ENCODE measurements at regions of chr7 and their contacts with region 1.

Region 1: DNA sequence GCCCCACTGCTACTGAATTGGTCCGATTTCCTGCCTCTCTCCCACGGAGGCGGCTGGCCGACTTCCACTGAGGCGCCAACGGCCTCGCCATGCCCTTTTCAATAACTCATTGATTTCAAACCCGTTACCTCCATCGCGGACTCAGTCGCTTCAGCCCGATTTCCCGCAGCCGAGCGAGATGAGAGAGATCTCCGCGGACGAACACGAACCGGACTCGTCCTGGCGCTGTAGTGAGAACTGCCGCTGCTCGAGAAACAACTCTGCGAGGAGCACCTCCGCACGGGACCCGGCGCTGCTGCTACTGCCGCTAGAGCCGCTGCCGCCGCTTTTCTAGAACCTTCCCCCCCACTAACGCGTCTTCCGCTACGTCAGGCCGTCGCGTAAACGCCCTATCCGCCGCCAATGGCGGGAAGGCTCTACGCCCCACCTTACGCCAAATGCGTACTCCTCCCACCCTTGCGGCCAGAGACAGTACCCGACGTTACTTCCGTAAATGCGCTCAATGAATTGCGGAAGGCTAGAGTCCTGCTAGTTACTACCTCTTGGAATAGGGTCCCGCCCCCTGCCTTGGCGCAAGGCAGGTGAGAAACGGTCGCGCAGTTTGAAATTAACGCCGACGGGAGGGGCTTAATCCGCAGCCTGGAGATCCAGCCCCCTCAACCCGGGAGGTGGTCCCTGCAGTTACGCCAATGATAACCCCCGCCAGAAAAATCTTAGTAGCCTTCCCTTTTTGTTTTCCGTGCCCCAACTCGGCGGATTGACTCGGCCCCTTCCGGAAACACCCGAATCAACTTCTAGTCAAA is at the start of gene HNRNPA2B1:
- DNase-seq: peak; percentile 88
- H3K4me3 ChIP-seq: peak within 1 kb of the TSS; percentile 100
- H3K27ac ChIP-seq: peak within 1 kb of the TSS; percentile 99 to 100
- H3K4me1 ChIP-seq: peaks cover 24 to 37% of the 10 kb centered on the region in 2 experiments
- H3K27me3 ChIP-seq: no peaks in the 10 kb centered on the region
- CTCF ChIP-seq: no peak
- EP300 ChIP-seq: no peak
- RAD21 ChIP-seq: no peak
- polyA plus RNA-seq, gene HNRNPA2B1: 459 and 483 TPM in 2 replicates

Region 2: GRCh38 chr7:25862260-25863037 is 338.2 kb before region 1 on chr7:
- CTCF ChIA-PET with region 1: no interaction called
- POLR2A ChIA-PET with region 1: interaction called, 10 read pairs
- DNase-seq: peak; percentile 95
- H3K4me3 ChIP-seq: peak overlapping the region; percentile 37 to 48
- H3K27ac ChIP-seq: no peak overlapping the region
- H3K4me1 ChIP-seq: peaks cover 0 to 9% of the 10 kb centered on the region in 2 experiments; a peak in 2 of 4 replicates
- H3K27me3 ChIP-seq: peaks cover 59% of the 10 kb centered on the region
- CTCF ChIP-seq: no peak
- EP300 ChIP-seq: no peak
- RAD21 ChIP-seq: no peak

Region 3: DNA sequence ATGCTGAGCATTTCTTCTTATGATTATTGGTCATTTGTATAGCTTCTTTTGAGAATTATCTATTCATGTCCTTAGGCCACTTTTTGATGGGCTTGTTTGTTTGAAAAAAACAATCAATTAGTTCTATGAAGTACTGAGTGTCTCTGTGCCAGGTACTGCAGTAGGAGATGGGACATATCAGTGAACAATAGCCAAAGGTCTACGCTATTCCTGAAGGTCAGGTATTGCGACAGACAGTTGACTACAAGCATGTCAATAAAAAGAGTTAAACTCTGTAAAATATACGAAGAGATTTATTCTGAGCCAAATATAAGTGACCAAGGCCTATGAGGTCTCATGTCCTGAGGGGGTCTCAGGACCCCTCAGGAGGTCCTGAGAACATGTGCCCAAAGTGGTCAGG is 170.7 kb before region 1 on chr7:
- CTCF ChIA-PET with region 1: no interaction called
- POLR2A ChIA-PET with region 1: no interaction called
- DNase-seq: no peak
- H3K4me3 ChIP-seq: no peak overlapping the region
- H3K27ac ChIP-seq: no peak overlapping the region
- H3K4me1 ChIP-seq: no peaks in the 10 kb centered on the region
- H3K27me3 ChIP-seq: no peaks in the 10 kb centered on the region
- CTCF ChIP-seq: no peak
- EP300 ChIP-seq: no peak
- RAD21 ChIP-seq: no peak

Region 4: DNA sequence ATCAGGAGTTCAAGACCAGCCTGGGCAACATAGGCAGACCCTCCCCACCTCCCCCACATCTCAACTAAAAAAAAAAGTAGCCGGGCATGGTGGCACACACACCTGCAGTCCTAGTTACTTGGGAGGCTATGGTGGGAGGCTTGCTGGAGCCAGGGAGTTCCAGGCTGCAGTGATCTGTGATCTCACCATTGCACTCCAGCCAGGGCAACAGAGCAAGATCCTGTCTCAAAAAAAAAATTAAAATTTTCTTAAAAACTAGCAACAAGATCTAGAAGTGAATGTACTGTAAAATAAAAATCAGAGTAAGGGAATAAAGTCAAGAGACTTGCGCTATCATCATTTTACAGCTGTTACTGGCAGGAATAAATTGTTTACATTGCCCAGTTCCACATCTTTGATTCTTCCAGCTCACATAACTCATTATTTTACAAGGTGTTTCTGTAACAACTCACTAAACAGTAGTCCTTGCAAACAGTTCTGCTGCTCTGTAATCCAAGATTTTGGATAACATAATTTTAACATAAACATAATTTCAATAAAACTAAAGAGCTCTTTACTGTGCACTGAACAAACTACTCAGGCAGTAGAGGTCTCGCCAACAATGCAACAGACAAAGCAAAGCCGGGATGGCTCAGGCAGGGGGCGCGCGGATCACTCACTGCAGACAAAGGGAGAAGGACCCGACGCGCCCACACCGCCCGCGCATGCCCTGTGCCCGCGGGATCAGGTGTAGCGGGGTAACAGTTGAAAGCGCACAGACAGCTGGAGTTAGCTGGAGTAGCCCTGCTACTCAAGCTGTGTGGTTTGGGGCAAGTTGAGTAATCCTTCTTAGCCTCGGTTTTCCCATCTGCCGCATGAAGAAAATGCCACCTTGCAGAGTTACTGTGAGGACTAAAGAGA is 122.0 kb before region 1 on chr7:
- CTCF ChIA-PET with region 1: interaction called, 260 read pairs
- POLR2A ChIA-PET with region 1: interaction called, 8 read pairs
- DNase-seq: peak; percentile 90
- H3K4me3 ChIP-seq: peak overlapping the region in 1 of 2 experiments; percentile 19; a peak in 1 of 4 replicates
- H3K27ac ChIP-seq: no peak overlapping the region
- H3K4me1 ChIP-seq: peaks cover 3 to 7% of the 10 kb centered on the region in 2 experiments; a peak in 2 of 4 replicates
- H3K27me3 ChIP-seq: peaks cover 46% of the 10 kb centered on the region; the same call in 1 of the 2 replicates
- CTCF ChIP-seq: peak; percentile 67
- EP300 ChIP-seq: no peak
- RAD21 ChIP-seq: peak; percentile 73

Region 5: DNA sequence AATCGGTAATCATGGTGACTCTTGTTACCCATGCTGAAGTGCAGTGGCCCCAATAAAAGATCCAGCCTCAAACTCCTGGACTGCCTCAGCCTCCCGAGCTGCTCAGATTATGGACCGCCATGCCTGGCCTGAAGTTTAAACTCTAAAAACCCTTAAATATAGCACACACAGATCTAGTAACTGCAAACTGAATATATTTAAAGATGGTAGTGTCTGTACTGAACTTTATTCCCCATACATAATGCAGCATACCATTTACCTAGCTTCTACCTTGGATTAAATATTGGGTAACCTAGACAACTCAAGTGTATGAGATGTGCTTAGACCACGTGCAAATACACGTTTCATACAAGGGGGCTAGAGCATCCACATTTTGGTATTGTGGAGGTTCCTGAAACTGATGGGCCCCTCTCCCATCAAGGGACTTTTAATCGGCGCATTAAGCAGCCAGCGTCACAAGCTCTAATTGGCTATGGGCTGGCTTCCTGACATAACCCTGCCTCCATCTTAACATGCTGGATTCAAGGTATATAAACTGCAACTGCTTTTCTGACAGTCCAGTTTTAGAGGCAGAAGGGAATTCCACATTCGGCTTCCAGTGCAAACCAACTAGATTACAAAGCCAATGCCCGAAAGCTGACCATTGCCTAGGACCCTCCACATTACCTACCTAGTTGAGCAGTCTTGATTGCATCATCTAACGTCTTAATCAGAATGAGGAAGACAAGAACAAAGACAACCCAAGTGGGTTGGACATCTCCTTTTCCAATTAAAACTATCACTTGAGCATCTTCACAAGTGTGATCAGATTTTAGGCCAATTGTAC is 13.1 kb before region 1 on chr7:
- CTCF ChIA-PET with region 1: interaction called, 71 read pairs
- POLR2A ChIA-PET with region 1: interaction called, 51 read pairs
- DNase-seq: no peak
- H3K4me3 ChIP-seq: no peak overlapping the region
- H3K27ac ChIP-seq: peak overlapping the region; percentile 13 to 25; a peak in 3 of 4 replicates
- H3K4me1 ChIP-seq: peaks cover 0 to 2% of the 10 kb centered on the region in 2 experiments; a peak in 2 of 4 replicates
- H3K27me3 ChIP-seq: no peaks in the 10 kb centered on the region
- CTCF ChIP-seq: no peak
- EP300 ChIP-seq: no peak
- RAD21 ChIP-seq: no peak

Region 6: DNA sequence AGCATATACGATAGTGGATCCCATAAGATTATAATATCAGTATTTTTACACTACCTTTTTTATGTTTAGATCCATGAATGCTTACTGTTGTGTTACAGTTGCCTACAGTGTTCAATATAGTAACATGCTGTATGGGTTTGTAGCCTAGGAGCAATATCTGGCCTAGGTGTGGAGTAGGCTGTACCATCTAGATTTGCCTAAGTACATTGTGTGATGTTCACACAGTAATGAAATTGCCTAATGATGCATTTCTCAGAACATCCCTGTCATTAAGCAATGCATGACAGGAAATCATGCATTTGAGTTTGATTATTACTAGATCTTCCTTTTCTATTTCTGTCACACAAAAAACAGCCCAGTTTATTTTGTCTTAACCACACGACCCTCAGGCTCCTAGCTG is 15.4 kb after region 1 on chr7:
- CTCF ChIA-PET with region 1: interaction called, 14 read pairs
- POLR2A ChIA-PET with region 1: interaction called, 4 read pairs
- DNase-seq: no peak
- H3K4me3 ChIP-seq: no peak overlapping the region
- H3K27ac ChIP-seq: no peak overlapping the region
- H3K4me1 ChIP-seq: no peaks in the 10 kb centered on the region
- H3K27me3 ChIP-seq: no peaks in the 10 kb centered on the region
- CTCF ChIP-seq: no peak
- EP300 ChIP-seq: no peak
- RAD21 ChIP-seq: no peak